Left cardiac atrium (tissue), 4 donors: ENCODE measurements at regions of chr17 and their contacts with region 1.

Region 1: GRCh38 chr17:28726226-28727130 is at the start of gene TLCD1:
- DNase-seq: peak; percentile 93
- ATAC-seq: peak; percentile 73 to 75
- total RNA-seq, gene TLCD1: 3.5 to 3.7 TPM

Region 2: DNA sequence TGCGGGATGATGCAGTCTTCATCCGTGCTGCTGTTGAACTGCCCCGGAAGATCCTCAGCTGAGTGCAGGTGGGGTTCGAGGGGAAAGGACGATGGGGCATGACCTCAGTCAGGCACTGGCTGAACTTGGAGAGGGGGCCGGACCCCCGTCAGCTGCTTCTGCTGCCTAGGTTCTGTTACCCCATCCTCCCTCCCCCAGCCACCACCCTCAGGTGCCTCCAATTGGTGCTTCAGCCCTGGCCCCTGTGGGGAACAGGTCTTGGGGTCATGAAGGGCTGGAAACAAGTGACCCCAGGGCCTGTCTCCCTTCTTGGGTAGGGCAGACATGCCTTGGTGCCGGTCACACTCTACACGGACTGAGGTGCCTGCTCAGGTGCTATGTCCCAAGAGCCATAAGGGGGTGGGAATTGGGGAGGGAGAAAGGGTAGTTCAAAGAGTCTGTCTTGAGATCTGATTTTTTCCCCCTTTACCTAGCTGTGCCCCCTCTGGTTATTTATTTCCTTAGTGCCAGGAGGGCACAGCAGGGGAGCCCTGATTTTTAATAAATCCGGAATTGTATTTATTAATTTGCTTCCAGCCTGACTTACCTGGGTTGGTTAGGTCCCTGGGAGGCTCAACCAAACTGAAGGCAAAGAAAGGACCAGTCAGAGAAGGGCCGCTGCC is 23.2 kb after region 1 on chr17:
- intact Hi-C with region 1: loop called in 1 of 2 experiments (anchors 2 kb)
- DNase-seq: no peak
- ATAC-seq: no peak

Region 3: DNA sequence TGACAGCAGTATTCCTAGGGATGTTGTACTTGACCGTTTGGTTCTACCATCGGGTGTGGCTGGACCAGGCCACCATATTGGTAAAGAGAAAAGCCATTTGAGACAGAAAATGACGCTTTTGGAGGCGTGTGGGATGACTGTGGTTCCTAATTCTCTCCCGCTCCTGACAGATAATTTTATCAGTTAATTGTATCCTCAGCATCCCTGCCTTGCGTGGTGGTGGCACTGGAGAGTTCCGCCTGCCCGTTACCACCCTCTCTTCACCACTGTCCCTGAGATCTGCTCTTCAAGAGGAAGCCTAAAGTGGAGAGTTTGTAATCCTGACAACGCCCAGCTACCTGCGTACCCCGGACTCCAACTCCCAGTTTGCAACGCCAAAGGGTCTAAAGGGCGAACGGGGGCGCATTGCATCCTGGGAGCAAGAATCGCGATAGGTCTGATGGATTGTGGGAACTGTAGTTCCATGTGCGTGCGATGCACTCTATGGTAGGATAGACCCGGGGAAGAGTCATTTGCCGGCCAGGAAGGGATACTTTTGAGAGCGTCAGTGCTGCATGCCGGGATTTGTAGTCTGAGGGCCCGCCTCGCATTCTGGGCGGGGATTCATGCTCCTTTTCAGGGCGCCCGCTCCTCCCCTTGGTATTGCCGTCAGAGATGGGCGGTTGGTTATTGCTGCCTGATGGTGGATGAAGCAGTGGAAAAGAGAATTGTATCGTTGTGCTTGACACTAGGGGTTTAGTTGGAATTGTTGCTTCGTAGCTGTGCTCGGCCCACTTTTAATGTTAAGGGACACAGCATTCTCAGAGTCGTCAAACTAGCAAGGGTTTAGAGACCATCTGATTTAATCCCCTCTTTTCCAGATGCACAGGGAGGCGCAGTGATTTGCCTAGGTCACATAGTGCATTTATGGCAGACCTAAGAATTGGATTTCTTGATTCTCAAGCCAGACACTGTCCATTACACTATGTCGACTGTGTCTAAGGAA is 225.8 kb after region 1 on chr17:
- intact Hi-C with region 1: loop called in 1 of 2 experiments (anchors 5 kb)
- DNase-seq: peak; percentile 97
- ATAC-seq: peak; percentile 81 to 88